MCF 10A (cell line): ENCODE measurements at regions of chr18 and their contacts with region 1.

Region 1: GRCh38 chr18:62714671-62715435 is 488 bp upstream of the PHLPP1 start:
- DNase-seq: peak; percentile 99
- H3K4me3 Mint-ChIP-seq: peak overlapping the region; percentile 76
- H3K27ac Mint-ChIP-seq: peak overlapping the region; percentile 98
- H3K4me1 Mint-ChIP-seq: peaks cover 20% of the 10 kb centered on the region
- H3K27me3 Mint-ChIP-seq: no peaks in the 10 kb centered on the region
- CTCF ChIP-seq: peak; percentile 61

Region 2: GRCh38 chr18:62741118-62741566 is 26.3 kb after region 1 on chr18:
- CTCF ChIA-PET with region 1: interaction called, 6 read pairs
- POLR2A ChIA-PET with region 1: interaction called, 43 read pairs
- intact Hi-C with region 1: no loop called
- DNase-seq: peak; percentile 88
- H3K4me3 Mint-ChIP-seq: peak overlapping the region; percentile 38
- H3K27ac Mint-ChIP-seq: peak overlapping the region; percentile 72
- H3K4me1 Mint-ChIP-seq: peaks cover 37% of the 10 kb centered on the region
- H3K27me3 Mint-ChIP-seq: no peaks in the 10 kb centered on the region
- CTCF ChIP-seq: no peak

Region 3: DNA sequence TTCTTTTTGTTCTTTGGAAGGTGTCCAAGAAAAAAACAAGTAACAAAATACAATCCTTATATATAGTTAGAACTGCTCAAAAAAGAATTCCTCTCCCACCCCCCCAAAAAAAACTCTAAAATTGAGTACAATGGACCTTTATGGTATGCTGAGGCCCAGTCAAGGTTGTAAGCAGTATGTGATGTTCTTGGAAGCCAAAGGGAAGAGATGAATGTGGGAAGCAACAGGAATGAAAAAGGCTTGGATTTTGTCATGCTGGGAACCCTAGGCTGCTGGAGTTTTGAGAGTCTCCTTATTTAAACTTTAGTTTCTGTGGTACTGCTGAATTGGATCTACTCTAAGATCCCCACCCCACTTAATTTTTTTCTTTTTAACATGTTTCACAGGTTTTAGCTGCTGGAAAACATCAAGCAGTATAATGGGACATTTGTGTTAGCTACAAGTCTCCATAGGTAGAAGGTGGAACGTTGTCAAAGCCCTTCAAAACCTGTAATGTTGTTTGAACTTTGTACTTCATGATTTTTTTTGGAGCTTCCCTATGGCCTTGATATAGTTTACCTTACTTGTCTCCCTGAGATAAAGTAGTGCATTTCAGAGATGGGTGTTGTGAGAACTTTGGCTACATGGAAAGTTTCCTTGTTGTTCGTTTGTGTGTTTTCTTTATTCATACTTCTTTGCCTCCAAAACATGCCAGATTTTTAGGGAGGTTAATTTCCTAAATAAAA is 58.2 kb after region 1 on chr18:
- CTCF ChIA-PET with region 1: no interaction called
- POLR2A ChIA-PET with region 1: interaction called, 316 read pairs
- intact Hi-C with region 1: no loop called
- DNase-seq: no peak
- H3K4me3 Mint-ChIP-seq: no peak overlapping the region
- H3K27ac Mint-ChIP-seq: no peak overlapping the region
- H3K4me1 Mint-ChIP-seq: peaks cover 20% of the 10 kb centered on the region
- H3K27me3 Mint-ChIP-seq: no peaks in the 10 kb centered on the region
- CTCF ChIP-seq: no peak

Region 4: GRCh38 chr18:62797329-62797728 is 82.5 kb after region 1 on chr18:
- CTCF ChIA-PET with region 1: interaction called, 18 read pairs
- POLR2A ChIA-PET with region 1: interaction called, 62 read pairs
- intact Hi-C with region 1: loop called (anchors 1 kb)
- DNase-seq: no peak
- H3K4me3 Mint-ChIP-seq: no peak overlapping the region
- H3K27ac Mint-ChIP-seq: no peak overlapping the region
- H3K4me1 Mint-ChIP-seq: no peaks in the 10 kb centered on the region
- H3K27me3 Mint-ChIP-seq: no peaks in the 10 kb centered on the region
- CTCF ChIP-seq: no peak

Region 5: DNA sequence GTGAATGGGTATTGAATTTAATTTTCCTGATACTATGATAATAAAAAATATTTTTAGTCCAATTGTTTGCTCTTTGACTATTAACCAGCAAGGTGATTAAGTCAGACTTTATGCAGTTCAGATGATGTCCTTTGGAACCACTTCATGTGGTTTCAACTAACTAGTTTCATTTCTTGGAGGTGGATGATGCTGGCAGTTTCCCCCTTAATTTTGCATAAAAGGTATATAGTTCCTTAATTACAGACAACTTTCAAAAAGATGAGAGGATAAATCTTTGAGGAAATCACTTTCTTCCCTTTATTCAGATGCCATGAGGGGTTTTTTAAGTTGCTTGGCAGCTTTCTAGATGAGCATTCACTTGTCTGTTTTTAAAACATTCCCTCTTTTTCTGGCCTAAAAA is 223.6 kb after region 1 on chr18:
- CTCF ChIA-PET with region 1: interaction called, 4 read pairs
- POLR2A ChIA-PET with region 1: interaction called, 21 read pairs
- intact Hi-C with region 1: no loop called
- DNase-seq: no peak
- H3K4me3 Mint-ChIP-seq: no peak overlapping the region
- H3K27ac Mint-ChIP-seq: no peak overlapping the region
- H3K4me1 Mint-ChIP-seq: peaks cover 15% of the 10 kb centered on the region
- H3K27me3 Mint-ChIP-seq: no peaks in the 10 kb centered on the region
- CTCF ChIP-seq: no peak

Region 6: DNA sequence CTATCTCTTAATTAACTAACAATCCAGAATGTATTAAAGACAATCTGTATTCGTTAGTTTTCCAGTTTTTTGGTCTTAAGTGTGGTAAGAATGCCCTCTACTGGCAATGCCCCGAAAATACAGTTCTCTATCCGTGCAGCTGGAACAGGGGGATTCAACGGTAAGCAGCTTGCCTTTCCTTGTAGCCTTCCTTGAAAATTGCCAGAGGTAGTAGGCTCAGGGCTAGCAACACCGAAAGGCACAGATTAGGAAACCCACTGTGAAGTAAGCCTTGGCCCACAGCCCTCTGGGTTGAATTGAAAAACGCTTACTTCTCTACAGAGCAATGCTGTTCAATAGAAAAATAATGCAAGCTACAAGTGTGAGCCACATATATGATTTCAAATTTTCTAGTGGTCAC is 724.5 kb after region 1 on chr18:
- CTCF ChIA-PET with region 1: interaction called, 4 read pairs
- POLR2A ChIA-PET with region 1: interaction called, 7 read pairs
- intact Hi-C with region 1: loop called (anchors 5 kb)
- DNase-seq: peak; percentile 71
- H3K4me3 Mint-ChIP-seq: no peak overlapping the region
- H3K27ac Mint-ChIP-seq: no peak overlapping the region
- H3K4me1 Mint-ChIP-seq: peaks cover 34% of the 10 kb centered on the region
- H3K27me3 Mint-ChIP-seq: no peaks in the 10 kb centered on the region
- CTCF ChIP-seq: peak; percentile 74